ENCODE measurements at regions of chr2 and their contacts with region 1.

Region 1: DNA sequence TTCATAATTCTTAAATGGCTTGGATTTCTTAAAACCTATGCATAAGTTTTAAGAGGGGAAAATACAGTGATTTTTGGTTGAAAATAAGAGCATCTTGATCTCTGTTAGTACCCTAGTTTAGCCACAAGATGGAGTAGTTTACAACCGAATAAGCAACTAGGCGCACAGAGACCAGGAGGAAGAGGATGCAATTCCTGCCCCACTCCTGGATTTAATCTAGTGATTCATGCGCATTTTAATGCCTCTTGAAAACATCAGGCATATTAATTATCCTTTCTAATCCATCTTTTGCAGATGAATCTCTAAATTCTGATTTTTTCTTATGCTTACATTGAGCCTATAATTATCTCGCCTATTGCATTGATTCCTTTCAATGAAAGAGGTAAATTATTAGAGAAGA is 76.7 kb downstream of the MRPS9 start:
- DNase-seq: peak in 1 of 10 donors; percentile 11
- H3K4me3 ChIP-seq: no peak overlapping the region
- H3K27ac ChIP-seq: no peak overlapping the region
- H3K27me3 ChIP-seq: no peaks in the 10 kb centered on the region
- CTCF ChIP-seq: peak; percentile 64 to 96 (median 86)

Region 2: DNA sequence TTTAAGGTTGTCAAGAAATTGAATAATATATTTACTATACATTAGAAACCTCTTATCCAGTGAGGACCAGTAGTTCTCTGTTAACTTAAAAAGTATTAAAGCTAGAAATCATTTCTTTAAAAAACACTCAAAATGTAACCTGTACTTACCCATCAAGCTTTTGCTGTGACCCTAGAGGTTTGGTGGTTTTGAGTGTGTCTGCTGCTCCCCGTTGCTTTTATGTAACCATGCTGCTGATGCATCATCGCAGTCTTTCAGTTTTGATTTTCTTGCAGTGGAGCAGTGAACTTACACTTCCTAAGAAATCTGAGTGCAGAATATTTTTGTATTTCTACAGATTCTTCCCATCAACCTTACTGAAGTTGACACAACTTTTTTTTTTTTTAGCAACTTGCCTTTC is 42.5 kb before region 1 on chr2:
- intact Hi-C with region 1: no loop called
- DNase-seq: no peak
- H3K4me3 ChIP-seq: no peak overlapping the region
- H3K27ac ChIP-seq: no peak overlapping the region
- H3K27me3 ChIP-seq: no peaks in the 10 kb centered on the region
- CTCF ChIP-seq: no peak

Region 3: DNA sequence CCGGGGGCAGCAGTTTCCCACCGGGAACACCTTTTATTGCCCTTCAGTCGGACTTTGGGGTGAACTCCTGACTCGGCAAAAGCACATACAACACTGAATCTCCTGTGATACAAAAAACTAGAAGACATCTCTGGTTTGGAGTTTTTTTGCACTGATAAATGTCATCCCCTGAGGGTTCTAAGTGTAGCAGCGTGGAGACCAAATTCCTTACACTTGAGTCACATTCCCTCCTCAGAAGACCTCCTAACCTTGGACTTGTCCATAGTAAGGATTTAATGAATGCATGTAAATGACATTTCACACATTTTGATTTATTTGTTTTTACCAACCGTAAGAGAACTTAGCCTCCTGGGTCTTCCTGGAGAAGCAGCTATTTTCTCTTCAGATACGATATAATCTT is 73.0 kb after region 1 on chr2:
- intact Hi-C with region 1: loop called in 1 of 2 experiments (anchors 5 kb)
- DNase-seq: no peak
- H3K4me3 ChIP-seq: no peak overlapping the region
- H3K27ac ChIP-seq: no peak overlapping the region
- H3K27me3 ChIP-seq: no peaks in the 10 kb centered on the region
- CTCF ChIP-seq: no peak

Region 4: GRCh38 chr2:105235388-105236054 is 121.0 kb after region 1 on chr2:
- intact Hi-C with region 1: loop called (anchors 2 kb)
- DNase-seq: peak; percentile 29 to 87 (median 71)
- H3K4me3 ChIP-seq: no peak overlapping the region
- H3K27ac ChIP-seq: peak overlapping the region in 4 of 59 donors; percentile 10 to 13 (median 12)
- H3K27me3 ChIP-seq: no peaks in the 10 kb centered on the region
- CTCF ChIP-seq: peak; percentile 37 to 86 (median 69)

Region 5: DNA sequence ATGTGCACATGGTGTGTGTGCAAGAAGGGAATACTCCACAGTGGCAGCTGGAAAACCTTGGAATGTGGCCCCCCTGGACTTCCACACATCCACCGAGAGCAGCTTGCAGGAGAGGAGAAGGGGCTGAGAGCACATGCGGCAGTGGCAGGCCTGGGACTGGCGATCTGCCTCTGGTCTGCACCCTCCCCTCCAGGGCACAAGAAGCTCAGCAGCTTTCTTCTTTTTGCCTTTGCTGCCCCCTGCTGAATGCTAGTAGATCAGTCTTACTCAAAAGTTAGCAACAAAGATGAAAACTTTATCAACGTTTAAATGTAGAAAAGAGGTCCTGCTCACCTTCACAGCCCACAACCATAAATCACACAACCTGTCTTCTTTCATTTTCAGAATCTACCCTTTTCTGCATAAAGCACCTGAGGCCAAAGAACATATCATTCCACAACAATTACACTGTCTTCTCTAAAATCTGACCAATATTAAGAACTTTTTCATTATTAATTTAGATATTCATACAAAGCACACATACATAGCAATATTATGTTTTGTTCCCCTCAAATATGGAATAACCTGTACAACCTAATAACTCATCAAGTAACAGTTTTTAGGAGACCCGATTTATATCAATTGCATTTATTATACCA is 180.4 kb after region 1 on chr2:
- intact Hi-C with region 1: loop called in 1 of 2 experiments (anchors 2 kb)
- DNase-seq: peak; percentile 38 to 74 (median 71)
- H3K4me3 ChIP-seq: no peak overlapping the region
- H3K27ac ChIP-seq: peak overlapping the region in 21 of 59 donors; percentile 1 to 68 (median 44)
- H3K27me3 ChIP-seq: no peaks in the 10 kb centered on the region
- CTCF ChIP-seq: peak; percentile 45 to 86 (median 70)